Transverse colon (tissue), 4 donors: ENCODE measurements at regions of chr7 and their contacts with region 1.

Region 1: GRCh38 chr7:47277321-47277792 is 304.6 kb downstream of the TNS3 start:
- DNase-seq: no peak
- H3K4me3 ChIP-seq: no peak overlapping the region
- H3K27ac ChIP-seq: no peak overlapping the region
- H3K4me1 ChIP-seq: no peaks in the 10 kb centered on the region
- H3K27me3 ChIP-seq: no peaks in the 10 kb centered on the region
- CTCF ChIP-seq: no peak
- EP300 ChIP-seq: no peak
- POLR2A ChIP-seq: no peak

Region 2: DNA sequence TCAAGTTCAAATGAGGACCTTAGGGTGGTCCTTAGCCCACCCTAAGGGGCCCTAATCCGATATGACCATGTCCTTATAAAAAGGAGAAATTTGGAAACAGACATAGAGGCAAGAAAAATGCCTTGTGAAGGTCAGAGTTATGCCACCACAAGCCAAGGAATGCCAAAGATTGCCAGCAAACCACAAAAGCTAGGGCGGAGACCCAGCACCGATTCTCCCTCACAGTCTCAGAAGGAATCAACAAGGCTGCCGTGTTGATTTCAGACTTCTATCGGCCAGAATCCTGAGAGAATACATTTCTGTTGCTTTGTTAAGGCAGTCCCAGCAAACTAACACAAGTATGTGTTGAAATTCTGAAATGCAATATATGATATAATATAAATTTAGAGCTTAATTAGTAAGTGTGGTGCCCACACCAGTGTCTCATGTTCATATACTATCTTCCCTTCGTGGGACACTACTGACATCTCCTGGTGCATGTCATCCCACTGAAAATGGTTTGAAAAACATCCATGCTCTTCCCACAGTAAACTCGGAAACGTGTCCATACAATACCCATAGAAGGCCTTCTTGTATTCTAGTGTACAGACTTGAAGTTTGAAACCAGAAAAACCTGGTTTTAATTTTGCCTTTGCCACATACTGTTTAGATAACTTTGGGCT is 44.5 kb before region 1 on chr7:
- in situ Hi-C with region 1: no loop called
- intact Hi-C with region 1: no loop called
- DNase-seq: no peak
- H3K4me3 ChIP-seq: no peak overlapping the region
- H3K27ac ChIP-seq: no peak overlapping the region
- H3K4me1 ChIP-seq: peaks cover 0 to 3% (median 0%) of the 10 kb centered on the region in 4 donors
- H3K27me3 ChIP-seq: no peaks in the 10 kb centered on the region
- CTCF ChIP-seq: peak in 1 of 5 experiments; percentile 8
- EP300 ChIP-seq: no peak
- POLR2A ChIP-seq: no peak

Region 3: GRCh38 chr7:47351233-47352154 is 74.1 kb after region 1 on chr7:
- in situ Hi-C with region 1: no loop called
- intact Hi-C with region 1: no loop called
- DNase-seq: peak; percentile 5
- H3K4me3 ChIP-seq: no peak overlapping the region
- H3K27ac ChIP-seq: no peak overlapping the region
- H3K4me1 ChIP-seq: peaks cover 7 to 25% (median 21%) of the 10 kb centered on the region in 4 donors
- H3K27me3 ChIP-seq: no peaks in the 10 kb centered on the region
- CTCF ChIP-seq: no peak
- EP300 ChIP-seq: no peak
- POLR2A ChIP-seq: no peak

Region 4: DNA sequence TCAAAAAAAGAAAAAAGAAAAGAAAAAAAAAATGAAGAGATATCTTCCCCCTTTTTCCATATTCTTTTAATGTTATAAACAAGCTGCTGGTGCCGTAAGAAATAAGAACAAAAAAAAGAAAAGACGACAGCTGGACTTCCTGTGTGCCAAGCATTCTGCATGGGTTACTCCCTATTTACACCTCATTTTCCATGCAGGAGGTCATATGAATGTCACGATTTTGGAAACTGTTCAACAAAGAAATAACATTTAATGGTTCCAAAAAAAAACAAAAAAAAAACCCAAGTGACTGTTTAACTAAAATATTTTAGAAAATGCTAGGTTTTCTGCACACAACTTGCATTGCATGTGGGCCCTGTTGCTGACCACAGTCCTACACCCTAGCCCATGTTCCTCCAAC is 145.3 kb after region 1 on chr7:
- in situ Hi-C with region 1: loop called in 1 of 4 experiments (anchors 25 kb)
- intact Hi-C with region 1: loop called (anchors 5 kb)
- DNase-seq: no peak
- H3K4me3 ChIP-seq: no peak overlapping the region
- H3K27ac ChIP-seq: no peak overlapping the region
- H3K4me1 ChIP-seq: no peaks in the 10 kb centered on the region
- H3K27me3 ChIP-seq: no peaks in the 10 kb centered on the region
- CTCF ChIP-seq: no peak
- EP300 ChIP-seq: no peak
- POLR2A ChIP-seq: no peak